Head of caudate nucleus (tissue), 42 donors: ENCODE measurements at regions of chr5 and their contacts with region 1.

Region 1: DNA sequence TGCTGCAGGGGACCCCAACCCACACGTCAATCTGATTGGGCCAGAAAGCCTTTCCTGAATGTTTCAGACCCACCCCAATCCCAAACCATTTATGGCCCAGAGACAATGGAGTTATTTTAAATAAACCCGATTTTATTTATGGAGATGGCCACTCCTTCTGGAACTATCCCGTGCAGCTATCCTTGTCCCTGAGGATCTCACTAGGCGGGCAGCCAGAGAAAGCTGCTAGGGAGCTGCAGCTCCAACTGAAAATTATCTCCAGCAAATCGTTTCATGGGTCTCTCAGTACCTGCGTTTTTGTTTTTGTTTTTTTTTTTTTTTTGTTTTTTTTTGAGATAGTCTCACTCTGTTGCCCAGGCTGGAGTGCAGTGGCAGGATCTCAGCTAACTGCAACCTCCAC is 23.0 kb downstream of the C1QTNF2 start:
- DNase-seq: no peak

Region 2: GRCh38 chr5:160008877-160009590 is 338.4 kb before region 1 on chr5 and contains the start of gene TTC1:
- intact Hi-C with region 1: loop called (anchors 5 kb)
- DNase-seq: peak; percentile 84 to 99 (median 97)

Region 3: DNA sequence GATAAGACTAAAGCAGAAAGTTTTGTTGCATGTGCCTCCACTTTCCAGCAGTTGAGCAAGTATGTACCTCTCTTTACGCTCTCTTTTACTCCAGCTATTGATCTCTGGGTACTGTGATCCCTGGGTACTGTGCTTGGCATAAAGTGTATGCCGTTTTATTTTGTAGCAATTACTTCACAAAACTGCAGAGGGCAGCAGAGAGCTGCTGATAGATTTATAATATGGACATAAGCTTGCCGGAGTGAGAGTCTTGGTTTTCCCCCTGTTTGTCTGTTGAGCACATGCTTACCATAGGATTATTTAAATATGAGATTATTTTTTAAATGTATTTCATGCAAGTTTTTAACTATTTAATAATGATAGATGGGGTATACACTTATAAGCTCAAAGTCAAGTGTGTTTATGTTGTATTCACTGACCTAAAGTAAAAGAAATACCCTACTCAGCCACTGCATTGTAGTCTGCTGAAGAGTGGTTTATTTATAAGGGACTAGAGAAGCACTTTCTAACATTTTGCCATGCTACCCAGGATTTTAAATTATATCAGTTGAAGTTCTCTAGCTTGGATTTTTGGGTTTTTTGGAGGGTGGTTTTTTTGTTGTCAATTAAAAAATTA is 325.5 kb before region 1 on chr5:
- intact Hi-C with region 1: loop called (anchors 5 kb)
- DNase-seq: peak in 32 of 42 donors; percentile 29 to 87 (median 66)

Region 4: GRCh38 chr5:160039810-160040470 is 307.5 kb before region 1 on chr5:
- intact Hi-C with region 1: no loop called
- DNase-seq: no peak

Region 5: DNA sequence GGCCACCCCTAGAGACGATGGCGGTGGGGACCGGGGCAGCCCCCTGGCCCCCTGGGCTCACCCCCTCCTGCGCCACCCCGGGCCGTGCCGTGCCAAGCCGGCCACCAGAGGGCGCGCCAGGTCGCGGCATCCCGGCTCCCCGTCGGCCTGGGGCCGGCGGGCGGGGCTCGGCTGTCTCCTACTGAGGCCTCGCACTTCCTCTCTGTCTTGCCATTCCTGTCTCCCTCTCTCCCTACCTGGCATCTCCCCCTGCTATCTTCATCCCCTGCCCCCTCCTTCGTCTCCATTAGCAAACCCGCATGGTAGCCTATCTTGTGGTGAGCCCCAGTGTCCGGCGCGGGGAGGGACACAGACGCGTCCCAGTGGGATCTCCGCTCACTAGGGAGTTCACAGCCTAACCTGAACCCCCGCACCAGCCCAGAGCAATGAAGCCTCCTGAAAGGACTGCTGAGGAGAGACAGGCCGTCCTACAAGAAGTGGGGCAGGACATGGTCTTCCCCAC is 148.0 kb before region 1 on chr5:
- intact Hi-C with region 1: loop called (anchors 5 kb)
- DNase-seq: peak; percentile 17 to 93 (median 82)